ENCODE measurements at regions of chr6 and their contacts with region 1.

Region 1: GRCh38 chr6:100116411-100117194 is 122.6 kb upstream of the MCHR2 start:
- DNase-seq: peak in 2 of 9 experiments; percentile 36 to 47
- ATAC-seq: no peak
- H3K4me3 ChIP-seq: no peak overlapping the region
- H3K4me3 Mint-ChIP-seq: no peak overlapping the region
- H3K27ac ChIP-seq: no peak overlapping the region
- H3K27ac Mint-ChIP-seq: no peak overlapping the region
- H3K4me1 ChIP-seq: no peaks in the 10 kb centered on the region
- H3K4me1 Mint-ChIP-seq: no peaks in the 10 kb centered on the region
- H3K27me3 ChIP-seq: no peaks in the 10 kb centered on the region
- H3K27me3 Mint-ChIP-seq: peaks cover 6% of the 10 kb centered on the region
- CTCF ChIP-seq: no peak

Region 2: DNA sequence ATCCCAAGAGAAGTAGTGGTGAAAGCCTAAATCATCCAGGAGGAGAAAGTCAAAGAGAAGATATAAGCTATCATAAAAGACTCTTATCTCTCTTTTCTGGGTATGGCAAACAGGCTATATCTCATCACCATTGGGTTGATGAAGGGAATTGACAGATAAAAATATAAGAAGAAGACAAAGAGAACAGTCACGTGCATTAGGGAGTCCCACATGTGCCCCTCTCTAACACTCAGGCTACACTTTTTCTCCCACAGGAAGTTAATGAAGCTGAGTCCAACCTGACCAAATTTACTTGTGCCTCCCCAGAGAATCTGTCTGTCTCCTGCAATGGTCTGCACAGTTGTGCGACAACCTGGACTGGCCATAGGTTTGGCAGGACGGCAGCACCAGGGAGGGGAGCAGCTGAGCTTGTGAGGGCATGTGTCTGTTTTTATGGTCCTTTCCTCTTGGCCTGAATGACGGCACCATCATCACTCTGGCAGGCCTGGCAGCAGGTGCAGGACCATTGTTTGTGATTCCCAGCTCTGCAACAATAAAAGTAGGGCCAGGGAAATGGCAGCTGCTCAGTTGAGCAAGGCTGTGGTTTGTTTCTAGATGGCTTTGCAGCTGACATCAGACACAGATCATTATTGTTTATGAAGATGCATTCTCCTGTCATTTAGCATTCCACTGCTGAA is 21.9 kb after region 1 on chr6:
- CTCF ChIA-PET with region 1: no interaction called
- POLR2A ChIA-PET with region 1: no interaction called
- intact Hi-C with region 1: no loop called
- DNase-seq: no peak
- ATAC-seq: no peak
- H3K4me3 ChIP-seq: no peak overlapping the region
- H3K4me3 Mint-ChIP-seq: no peak overlapping the region
- H3K27ac ChIP-seq: no peak overlapping the region
- H3K27ac Mint-ChIP-seq: no peak overlapping the region
- H3K4me1 ChIP-seq: no peaks in the 10 kb centered on the region
- H3K4me1 Mint-ChIP-seq: no peaks in the 10 kb centered on the region
- H3K27me3 ChIP-seq: no peaks in the 10 kb centered on the region
- H3K27me3 Mint-ChIP-seq: peaks cover 2% of the 10 kb centered on the region
- CTCF ChIP-seq: no peak

Region 3: DNA sequence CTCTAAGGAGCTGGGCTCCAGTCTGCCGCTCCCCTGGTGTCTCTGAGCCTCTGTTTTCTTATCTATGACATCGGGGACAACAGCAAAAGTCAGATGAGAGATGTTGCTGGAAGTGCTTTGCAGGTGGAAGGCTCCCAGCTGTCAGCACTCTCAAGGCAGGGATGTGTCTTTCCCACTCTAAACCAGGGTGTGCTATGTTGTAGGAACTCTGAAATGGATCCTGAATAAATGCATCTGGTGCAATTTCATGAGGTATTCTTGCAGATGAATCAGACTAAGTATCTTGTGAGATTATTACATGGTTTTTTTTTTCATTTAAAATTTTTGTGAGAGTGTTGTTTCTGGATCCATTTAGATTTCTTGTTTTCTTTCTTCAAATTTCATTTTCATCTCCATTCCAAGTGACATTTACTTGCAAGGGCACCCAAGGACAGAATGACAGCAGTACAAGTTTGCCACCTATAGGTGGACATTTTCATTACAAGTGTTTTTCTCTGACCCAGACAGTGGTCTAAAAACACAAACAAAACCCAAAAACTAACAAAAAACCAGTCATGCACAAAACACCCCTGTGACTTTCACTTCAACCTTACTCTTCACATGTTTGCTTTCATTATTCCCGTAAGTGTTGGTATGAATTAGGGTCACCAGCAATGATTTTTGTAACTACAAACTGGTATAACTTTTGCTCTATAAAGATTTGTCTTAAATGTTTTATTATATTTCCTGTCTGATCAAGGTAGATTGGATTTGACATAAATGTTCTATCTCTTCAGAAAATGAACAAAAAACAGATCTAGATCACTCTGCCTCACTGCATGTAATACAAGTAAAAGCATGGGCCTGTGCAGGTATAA is 362.8 kb after region 1 on chr6:
- CTCF ChIA-PET with region 1: no interaction called
- POLR2A ChIA-PET with region 1: no interaction called
- intact Hi-C with region 1: loop called (anchors 2 to 5 kb)
- DNase-seq: peak in 2 of 9 experiments; percentile 30 to 48
- ATAC-seq: no peak
- H3K4me3 ChIP-seq: no peak overlapping the region
- H3K4me3 Mint-ChIP-seq: no peak overlapping the region
- H3K27ac ChIP-seq: no peak overlapping the region
- H3K27ac Mint-ChIP-seq: no peak overlapping the region
- H3K4me1 ChIP-seq: no peaks in the 10 kb centered on the region
- H3K4me1 Mint-ChIP-seq: no peaks in the 10 kb centered on the region
- H3K27me3 ChIP-seq: no peaks in the 10 kb centered on the region
- H3K27me3 Mint-ChIP-seq: peaks cover 19% of the 10 kb centered on the region
- CTCF ChIP-seq: peak; percentile 51

Region 4: DNA sequence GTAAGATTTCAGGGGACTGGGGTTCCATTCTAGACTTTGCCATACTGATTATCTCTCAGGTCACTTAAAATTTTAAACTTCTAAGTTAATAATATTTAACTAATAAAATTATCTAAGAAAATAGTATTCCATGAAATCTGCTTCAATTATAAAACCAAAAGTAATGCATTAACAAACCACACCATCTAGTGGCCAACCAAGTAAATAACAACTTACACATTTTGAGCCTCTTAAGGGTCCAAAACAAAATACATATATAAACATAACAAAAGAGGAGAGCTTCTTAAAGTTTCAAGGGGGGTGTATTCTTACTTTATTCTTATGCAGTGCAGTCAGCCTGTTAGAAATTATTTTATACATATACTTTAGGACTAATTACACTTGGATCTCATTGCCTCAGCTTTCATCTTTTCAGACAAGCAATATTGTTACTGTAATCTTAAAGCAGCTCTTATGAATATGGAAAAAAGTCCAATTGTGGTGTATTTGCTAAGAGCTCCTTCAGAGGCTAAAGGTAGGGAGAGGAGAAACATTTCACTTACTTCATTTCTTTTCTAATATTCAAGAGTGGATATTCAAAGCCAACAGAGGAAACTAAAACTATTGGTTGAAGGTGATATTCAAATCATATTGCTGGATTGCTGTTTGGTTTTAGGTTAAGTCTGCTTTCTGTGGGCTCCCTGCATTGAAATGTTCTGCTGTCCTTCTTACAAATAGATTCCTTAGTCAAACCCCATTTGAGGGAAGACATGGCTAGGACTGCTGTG is 547.9 kb after region 1 on chr6:
- CTCF ChIA-PET with region 1: interaction called, 3 read pairs
- POLR2A ChIA-PET with region 1: no interaction called
- intact Hi-C with region 1: loop called (anchors 5 to 10 kb)
- DNase-seq: peak in 2 of 9 experiments; percentile 33 to 52
- ATAC-seq: peak; percentile 34
- H3K4me3 ChIP-seq: no peak overlapping the region
- H3K4me3 Mint-ChIP-seq: no peak overlapping the region
- H3K27ac ChIP-seq: peak overlapping the region in 1 of 2 experiments; percentile 37
- H3K27ac Mint-ChIP-seq: peak overlapping the region; percentile 83
- H3K4me1 ChIP-seq: no peaks in the 10 kb centered on the region
- H3K4me1 Mint-ChIP-seq: peaks cover 10% of the 10 kb centered on the region
- H3K27me3 ChIP-seq: no peaks in the 10 kb centered on the region
- H3K27me3 Mint-ChIP-seq: no peaks in the 10 kb centered on the region
- CTCF ChIP-seq: peak; percentile 79